ENCODE measurements at regions of chr3 and their contacts with region 1.

Region 1: DNA sequence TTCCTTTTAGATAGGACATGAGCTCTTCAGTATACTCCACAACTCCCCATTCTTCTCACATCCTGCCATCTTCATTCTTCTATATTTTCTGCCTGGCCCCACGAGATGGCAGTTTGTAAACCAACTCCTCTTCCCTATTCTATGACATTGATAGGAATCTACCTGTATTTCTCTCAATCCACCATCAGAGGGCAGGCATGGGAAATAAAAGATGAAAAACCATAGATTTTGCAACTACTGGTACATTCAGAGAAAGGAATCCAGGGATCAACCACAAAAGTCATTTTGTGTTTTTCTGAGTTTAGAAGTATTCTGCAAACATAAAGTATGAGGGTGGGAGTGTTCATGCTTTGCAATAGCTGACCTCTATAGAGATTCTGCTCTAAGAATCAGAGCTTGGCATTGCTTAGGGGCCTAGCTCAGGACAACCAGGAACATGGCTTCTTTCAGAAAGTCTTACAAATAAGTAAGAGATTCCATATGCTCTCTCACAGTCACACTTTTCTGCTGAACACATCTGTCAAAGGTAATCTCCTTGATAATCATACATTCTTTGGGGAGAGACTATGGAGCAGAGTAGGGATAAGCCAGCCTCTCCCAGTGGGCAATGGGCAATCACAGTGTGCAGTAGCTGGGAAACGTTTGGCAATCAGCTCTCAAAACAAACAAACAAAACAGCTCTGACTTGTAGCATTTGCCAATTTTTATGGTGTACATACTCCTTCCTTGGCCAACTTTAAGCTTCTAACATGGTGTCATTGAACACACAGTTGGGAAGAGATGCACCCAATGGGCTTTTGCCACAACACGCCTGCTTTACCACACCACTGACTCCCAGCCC is 43.1 kb upstream of the SLC25A36 start:
- DNase-seq: peak; percentile 87
- ATAC-seq: peak; percentile 94
- H3K4me3 ChIP-seq: no peak overlapping the region
- H3K27ac ChIP-seq: peak overlapping the region; percentile 29; the same call in 1 of the 2 replicates
- H3K4me1 ChIP-seq: peaks cover 3% of the 10 kb centered on the region; the same call in 1 of the 2 replicates
- H3K27me3 ChIP-seq: peaks cover 2% of the 10 kb centered on the region
- CTCF ChIP-seq: peak; percentile 83
- POLR2A ChIP-seq: no peak
- RAD21 ChIP-seq: peak; percentile 70

Region 2: DNA sequence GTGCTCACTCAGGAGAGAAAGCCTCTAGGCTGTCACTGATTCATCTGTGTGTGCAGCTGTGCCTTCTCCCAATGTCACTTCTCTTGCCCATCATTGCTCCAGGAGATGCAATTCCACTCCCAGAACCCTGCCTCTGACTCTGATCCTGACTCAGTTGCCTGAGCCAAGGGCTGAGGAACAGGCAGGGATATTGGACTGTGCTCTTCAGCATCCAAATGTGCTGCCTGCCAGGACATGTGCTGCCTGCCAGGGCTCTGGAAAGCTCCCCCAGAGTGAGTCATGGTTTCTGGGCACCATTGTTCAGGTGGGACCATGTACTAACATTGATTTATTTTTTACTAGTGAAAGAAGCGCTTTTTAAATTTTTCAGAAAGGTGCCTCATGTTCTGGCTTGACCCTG is 149.7 kb before region 1 on chr3:
- CTCF ChIA-PET with region 1: no interaction called
- POLR2A ChIA-PET with region 1: no interaction called
- dilution Hi-C with region 1: no loop called
- in situ Hi-C with region 1: no loop called
- intact Hi-C with region 1: no loop called
- DNase-seq: no peak
- ATAC-seq: no peak
- H3K4me3 ChIP-seq: no peak overlapping the region
- H3K27ac ChIP-seq: no peak overlapping the region
- H3K4me1 ChIP-seq: no peaks in the 10 kb centered on the region
- H3K27me3 ChIP-seq: no peaks in the 10 kb centered on the region
- CTCF ChIP-seq: no peak
- POLR2A ChIP-seq: no peak
- RAD21 ChIP-seq: no peak

Region 3: DNA sequence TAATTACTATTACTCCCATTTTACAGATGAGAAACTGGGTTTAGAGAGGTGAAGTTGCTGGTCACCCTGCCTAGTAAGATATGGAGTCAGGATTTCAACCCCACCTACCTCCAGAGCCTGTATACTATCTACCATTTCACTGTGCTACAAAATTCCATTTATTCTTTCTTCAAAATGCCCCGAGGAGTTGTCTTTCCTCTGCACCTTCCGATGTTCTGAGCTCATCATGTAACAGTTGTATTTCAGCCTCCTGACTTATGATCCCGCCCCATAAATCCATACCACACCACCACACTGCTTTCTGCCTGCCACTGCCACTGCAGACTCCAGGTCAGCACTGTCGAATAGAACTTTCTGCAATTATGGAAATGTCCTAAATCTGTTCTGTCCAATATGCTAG is 28.2 kb before region 1 on chr3:
- CTCF ChIA-PET with region 1: no interaction called
- POLR2A ChIA-PET with region 1: no interaction called
- dilution Hi-C with region 1: no loop called
- in situ Hi-C with region 1: no loop called
- intact Hi-C with region 1: no loop called
- DNase-seq: no peak
- ATAC-seq: no peak
- H3K4me3 ChIP-seq: no peak overlapping the region
- H3K27ac ChIP-seq: no peak overlapping the region
- H3K4me1 ChIP-seq: no peaks in the 10 kb centered on the region
- H3K27me3 ChIP-seq: no peaks in the 10 kb centered on the region
- CTCF ChIP-seq: no peak
- POLR2A ChIP-seq: no peak
- RAD21 ChIP-seq: no peak

Region 4: GRCh38 chr3:140941434-140942220 is 43.1 kb after region 1 on chr3 and contains the start of gene SLC25A36:
- CTCF ChIA-PET with region 1: interaction called, 4 read pairs
- POLR2A ChIA-PET with region 1: no interaction called
- dilution Hi-C with region 1: no loop called
- in situ Hi-C with region 1: no loop called
- intact Hi-C with region 1: loop called (anchors 1 kb)
- DNase-seq: peak; percentile 98
- ATAC-seq: peak; percentile 97
- H3K4me3 ChIP-seq: peak within 1 kb of the TSS; percentile 82
- H3K27ac ChIP-seq: peak within 1 kb of the TSS; percentile 89
- H3K4me1 ChIP-seq: no peaks in the 10 kb centered on the region
- H3K27me3 ChIP-seq: no peaks in the 10 kb centered on the region
- CTCF ChIP-seq: no peak
- POLR2A ChIP-seq: peak; percentile 82
- RAD21 ChIP-seq: no peak
- total RNA-seq, gene SLC25A36: 70.3 and 76.7 TPM in 2 replicates

Region 5: GRCh38 chr3:140972833-140973232 is 74.3 kb after region 1 on chr3:
- CTCF ChIA-PET with region 1: interaction called, 7 read pairs
- POLR2A ChIA-PET with region 1: no interaction called
- dilution Hi-C with region 1: no loop called
- in situ Hi-C with region 1: no loop called
- intact Hi-C with region 1: loop called (anchors 5 kb)
- DNase-seq: peak; percentile 26
- ATAC-seq: peak; percentile 79
- H3K4me3 ChIP-seq: no peak overlapping the region
- H3K27ac ChIP-seq: no peak overlapping the region
- H3K4me1 ChIP-seq: no peaks in the 10 kb centered on the region
- H3K27me3 ChIP-seq: no peaks in the 10 kb centered on the region
- CTCF ChIP-seq: peak; percentile 50
- POLR2A ChIP-seq: no peak
- RAD21 ChIP-seq: peak; percentile 44

Region 6: DNA sequence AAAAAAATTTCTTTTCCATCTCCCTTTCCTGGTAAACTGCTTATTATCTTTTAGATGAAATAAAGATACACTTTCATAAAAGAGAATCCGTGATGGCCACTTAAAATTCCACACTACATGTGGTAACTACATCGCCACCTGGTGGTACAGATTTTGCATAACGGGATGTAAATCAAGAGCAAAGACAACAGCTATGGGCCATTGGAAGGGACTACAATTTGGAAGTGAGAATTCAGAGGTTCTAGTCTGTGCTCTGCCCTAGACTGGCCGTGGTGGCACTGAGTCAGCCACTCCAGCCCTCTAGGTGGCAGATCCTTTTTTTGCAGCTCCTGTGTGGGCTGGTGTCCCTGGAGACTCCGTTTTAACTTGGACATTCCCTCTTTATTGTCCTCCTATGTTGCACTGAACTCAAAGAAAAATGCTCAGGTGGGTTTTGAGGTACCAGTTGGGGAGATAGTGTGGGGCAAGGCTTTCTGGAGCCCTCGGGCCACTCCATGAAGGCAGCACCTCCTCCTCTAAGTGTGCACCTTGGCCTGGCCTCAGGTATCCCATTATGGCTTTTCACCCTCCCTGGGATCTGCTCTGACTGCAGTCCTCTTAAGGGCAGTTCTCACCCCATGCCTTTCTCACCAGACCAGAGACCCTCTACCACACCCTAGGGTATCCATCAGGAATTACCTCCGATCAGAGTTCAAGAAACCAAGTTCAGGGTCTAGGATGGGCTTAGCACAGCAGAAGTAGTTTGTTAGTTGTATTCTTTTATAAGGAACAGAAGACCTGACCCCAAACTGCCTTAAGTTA is 207.5 kb after region 1 on chr3:
- CTCF ChIA-PET with region 1: interaction called, 4 read pairs
- POLR2A ChIA-PET with region 1: no interaction called
- dilution Hi-C with region 1: no loop called
- in situ Hi-C with region 1: loop called (anchors 10 kb)
- intact Hi-C with region 1: loop called (anchors 1 kb)
- DNase-seq: peak; percentile 86
- ATAC-seq: peak; percentile 90
- H3K4me3 ChIP-seq: no peak overlapping the region
- H3K27ac ChIP-seq: no peak overlapping the region
- H3K4me1 ChIP-seq: no peaks in the 10 kb centered on the region
- H3K27me3 ChIP-seq: peaks cover 32% of the 10 kb centered on the region
- CTCF ChIP-seq: peak; percentile 80
- POLR2A ChIP-seq: no peak
- RAD21 ChIP-seq: peak; percentile 72

Region 7: DNA sequence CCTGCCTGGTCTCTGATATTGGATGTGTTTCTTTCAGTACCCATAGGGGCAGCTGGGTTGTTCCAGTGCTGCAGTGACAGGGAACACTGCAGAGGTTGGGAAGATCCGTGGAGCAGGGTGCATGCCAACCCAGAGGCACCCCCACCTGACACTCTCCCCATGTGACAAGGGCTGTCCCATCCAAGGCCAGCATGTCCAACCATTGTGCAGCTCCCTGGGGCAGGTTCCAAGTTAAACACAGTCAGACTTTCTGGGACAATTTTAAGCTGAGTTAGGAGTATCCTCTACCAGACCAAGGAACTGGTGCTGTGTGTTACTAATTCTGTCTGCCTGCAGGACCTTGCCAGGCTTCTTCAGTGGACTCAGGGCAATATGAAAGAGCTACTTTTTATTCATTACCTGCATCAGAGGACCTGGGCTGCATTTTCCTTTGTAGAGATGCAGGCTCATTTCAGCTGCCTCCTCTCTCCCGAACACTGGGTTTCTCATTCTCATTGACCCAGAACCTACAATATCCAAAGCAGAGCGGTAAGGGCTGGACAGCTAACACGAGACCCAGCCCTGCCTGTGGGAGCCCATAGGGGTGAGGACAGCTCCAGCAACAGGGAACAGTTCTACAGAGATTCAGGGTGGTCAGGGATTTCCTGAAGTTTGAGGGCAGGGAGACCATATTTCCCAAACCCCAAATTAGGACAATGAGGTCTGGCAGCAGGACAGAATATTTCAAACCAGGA is 225.3 kb after region 1 on chr3:
- CTCF ChIA-PET with region 1: no interaction called
- POLR2A ChIA-PET with region 1: no interaction called
- dilution Hi-C with region 1: no loop called
- in situ Hi-C with region 1: no loop called
- intact Hi-C with region 1: no loop called
- DNase-seq: no peak
- ATAC-seq: no peak
- H3K4me3 ChIP-seq: no peak overlapping the region
- H3K27ac ChIP-seq: no peak overlapping the region
- H3K4me1 ChIP-seq: no peaks in the 10 kb centered on the region
- H3K27me3 ChIP-seq: peaks cover 5% of the 10 kb centered on the region; the same call in 1 of the 2 replicates
- CTCF ChIP-seq: no peak
- POLR2A ChIP-seq: no peak
- RAD21 ChIP-seq: no peak